MCF 10A (cell line): ENCODE measurements at regions of chr19 and their contacts with region 1.

Region 1: GRCh38 chr19:18281082-18282020 is at the start of gene JUND:
- DNase-seq: peak; percentile 97
- H3K4me3 Mint-ChIP-seq: peak within 1 kb of the TSS; percentile 87
- H3K27ac Mint-ChIP-seq: peak within 1 kb of the TSS; percentile 98
- H3K4me1 Mint-ChIP-seq: peaks cover 13% of the 10 kb centered on the region
- H3K27me3 Mint-ChIP-seq: no peaks in the 10 kb centered on the region
- CTCF ChIP-seq: no peak
- total RNA-seq, gene JUND: 120 and 123 TPM in 2 replicates

Region 2: GRCh38 chr19:18152444-18152816 is 128.9 kb before region 1 on chr19:
- CTCF ChIA-PET with region 1: interaction called, 4 read pairs
- POLR2A ChIA-PET with region 1: interaction called, 21 read pairs
- intact Hi-C with region 1: no loop called
- DNase-seq: peak; percentile 97
- H3K4me3 Mint-ChIP-seq: peak overlapping the region; percentile 88
- H3K27ac Mint-ChIP-seq: peak overlapping the region; percentile 99
- H3K4me1 Mint-ChIP-seq: peaks cover 26% of the 10 kb centered on the region
- H3K27me3 Mint-ChIP-seq: no peaks in the 10 kb centered on the region
- CTCF ChIP-seq: peak; percentile 68

Region 3: GRCh38 chr19:18266771-18267686 is 14.3 kb before region 1 on chr19:
- CTCF ChIA-PET with region 1: interaction called, 7 read pairs
- POLR2A ChIA-PET with region 1: interaction called, 20 read pairs
- intact Hi-C with region 1: no loop called
- DNase-seq: no peak
- H3K4me3 Mint-ChIP-seq: no peak overlapping the region
- H3K27ac Mint-ChIP-seq: no peak overlapping the region
- H3K4me1 Mint-ChIP-seq: no peaks in the 10 kb centered on the region
- H3K27me3 Mint-ChIP-seq: no peaks in the 10 kb centered on the region
- CTCF ChIP-seq: no peak

Region 4: GRCh38 chr19:18304458-18305310 is 23.3 kb after region 1 on chr19:
- CTCF ChIA-PET with region 1: interaction called, 15 read pairs
- POLR2A ChIA-PET with region 1: interaction called, 81 read pairs
- intact Hi-C with region 1: loop called (anchors 1 kb)
- DNase-seq: no peak
- H3K4me3 Mint-ChIP-seq: peak overlapping the region; percentile 53
- H3K27ac Mint-ChIP-seq: peak overlapping the region; percentile 89
- H3K4me1 Mint-ChIP-seq: peaks cover 23% of the 10 kb centered on the region
- H3K27me3 Mint-ChIP-seq: no peaks in the 10 kb centered on the region
- CTCF ChIP-seq: no peak

Region 5: DNA sequence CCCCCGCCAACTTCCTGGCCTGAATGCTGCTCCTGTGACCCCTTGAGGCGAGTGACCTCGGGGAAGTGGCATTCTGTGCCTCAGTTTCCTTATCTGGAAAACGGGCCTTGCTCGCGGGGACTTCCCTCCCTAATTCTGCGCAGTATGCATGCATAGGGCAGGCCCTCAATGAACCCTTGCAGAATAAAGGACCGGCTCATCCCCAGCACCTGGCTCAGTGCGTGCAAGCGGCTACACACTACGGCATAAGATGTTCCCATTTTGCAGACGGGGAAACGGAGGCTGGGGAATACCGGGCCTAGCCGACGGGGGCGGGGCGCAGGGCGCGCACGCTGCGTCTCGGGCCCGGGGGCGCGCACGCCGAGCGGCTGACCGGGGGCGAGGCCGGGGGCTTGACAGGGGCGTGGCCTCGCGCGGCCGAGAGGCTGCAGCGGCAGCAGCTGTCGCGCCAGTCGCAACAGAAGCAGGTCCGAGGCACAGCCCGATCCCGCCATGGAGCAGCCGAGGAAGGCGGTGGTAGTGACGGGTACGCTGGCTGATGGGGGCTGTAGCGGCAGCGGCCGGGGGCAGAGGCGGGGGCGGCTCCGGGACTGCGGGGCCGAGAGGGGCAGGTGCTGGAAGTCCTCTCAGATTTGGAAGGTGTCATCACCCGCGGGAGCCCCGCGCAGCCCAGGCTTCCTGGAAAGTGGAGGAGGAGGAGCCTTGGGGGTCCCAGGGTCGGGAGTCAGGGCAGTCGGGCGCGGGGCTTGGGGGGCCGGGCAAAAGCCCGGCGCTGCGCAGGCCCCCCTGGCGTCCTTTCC is 59.0 kb after region 1 on chr19 and contains the start of gene PGPEP1:
- CTCF ChIA-PET with region 1: interaction called, 13 read pairs
- POLR2A ChIA-PET with region 1: interaction called, 32 read pairs
- intact Hi-C with region 1: no loop called
- DNase-seq: no peak
- H3K4me3 Mint-ChIP-seq: peak within 1 kb of the TSS; percentile 58
- H3K27ac Mint-ChIP-seq: no peak within 1 kb of the TSS
- H3K4me1 Mint-ChIP-seq: peaks cover 11% of the 10 kb centered on the region
- H3K27me3 Mint-ChIP-seq: no peaks in the 10 kb centered on the region
- CTCF ChIP-seq: no peak
- total RNA-seq, gene PGPEP1: 6.5 and 11.9 TPM in 2 replicates

Region 6: GRCh38 chr19:18419195-18419698 is 137.9 kb after region 1 on chr19 and contains the start of gene SSBP4:
- CTCF ChIA-PET with region 1: interaction called, 4 read pairs
- POLR2A ChIA-PET with region 1: interaction called, 24 read pairs
- intact Hi-C with region 1: no loop called
- DNase-seq: peak; percentile 80
- H3K4me3 Mint-ChIP-seq: peak within 1 kb of the TSS; percentile 77
- H3K27ac Mint-ChIP-seq: peak within 1 kb of the TSS; percentile 72
- H3K4me1 Mint-ChIP-seq: peaks cover 29% of the 10 kb centered on the region
- H3K27me3 Mint-ChIP-seq: no peaks in the 10 kb centered on the region
- CTCF ChIP-seq: peak; percentile 51
- total RNA-seq, gene SSBP4: 22.3 and 26.3 TPM in 2 replicates